ENCODE measurements at regions of chr7 and their contacts with region 1.

Region 1: DNA sequence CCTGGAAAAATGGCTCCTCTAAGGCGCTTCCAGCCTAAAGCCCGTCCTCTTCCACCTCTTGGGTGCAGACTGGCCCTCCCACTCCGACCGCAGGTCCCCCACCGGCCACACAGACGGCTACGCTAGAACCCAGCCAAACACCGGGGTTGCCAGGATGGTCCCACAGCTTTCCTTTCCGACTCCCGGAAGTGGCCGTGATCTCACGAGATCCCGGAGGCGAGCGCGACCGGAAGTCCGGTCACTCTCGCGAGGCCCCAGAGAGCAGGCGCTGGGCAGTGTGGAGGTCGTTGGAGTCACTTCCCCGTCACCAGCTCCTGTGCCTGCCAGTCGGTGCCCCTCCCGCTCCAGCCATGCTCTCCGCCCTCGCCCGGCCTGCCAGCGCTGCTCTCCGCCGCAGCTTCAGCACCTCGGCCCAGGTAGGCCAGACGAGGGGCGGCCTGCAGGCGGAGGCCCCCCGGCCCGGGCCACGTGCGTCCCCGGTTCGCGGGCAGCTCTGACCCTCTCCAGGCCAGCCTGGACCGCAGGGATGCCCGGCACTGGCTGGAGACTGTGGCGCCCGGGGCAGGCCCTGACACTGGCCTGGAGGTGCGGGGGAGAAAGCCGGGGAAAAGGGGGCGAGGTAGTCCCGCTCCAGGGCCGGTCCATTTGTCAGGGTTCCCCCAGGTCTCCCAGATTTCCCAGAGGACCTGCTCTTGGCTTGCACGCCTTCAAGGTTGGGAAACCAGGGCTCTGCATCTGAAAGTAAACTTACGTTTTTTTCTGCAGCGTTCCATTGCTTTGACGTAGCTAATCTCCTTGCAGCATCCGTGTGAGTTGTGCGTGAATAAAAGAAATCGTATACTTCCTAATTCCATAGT is at the starts of genes MDH2 and STYXL1:
- DNase-seq: peak; percentile 97
- H3K4me3 ChIP-seq: peak within 1 kb of the TSS; percentile 77 to 97 (median 84)
- H3K27ac ChIP-seq: peak within 1 kb of the TSS; percentile 89
- H3K4me1 ChIP-seq: peaks cover 9% of the 10 kb centered on the region
- H3K27me3 ChIP-seq: no peaks in the 10 kb centered on the region
- CTCF ChIP-seq: no peak
- total RNA-seq, gene MDH2: 44.0 to 188 TPM
- total RNA-seq, gene STYXL1: 43.0 to 44.3 TPM

Region 2: DNA sequence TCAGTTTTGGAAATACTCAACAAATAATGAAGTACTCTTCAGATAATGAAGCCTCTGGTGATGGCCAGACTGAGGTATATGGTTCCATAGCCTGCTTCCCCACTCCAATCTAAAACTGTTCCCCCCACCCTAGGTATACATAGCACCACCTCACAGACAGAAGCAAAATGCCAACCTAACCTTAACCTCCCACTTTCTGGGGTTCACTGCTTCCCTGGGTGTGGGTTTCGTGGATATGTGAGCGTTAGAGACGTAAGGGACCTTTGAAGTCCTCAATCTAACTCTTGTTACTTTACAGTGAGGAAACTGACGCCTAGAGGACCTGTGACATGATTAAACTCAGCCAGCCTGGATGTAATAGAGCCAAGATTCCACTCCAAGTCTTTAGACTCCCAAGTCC is 167.8 kb before region 1 on chr7:
- CTCF ChIA-PET with region 1: no interaction called
- dilution Hi-C with region 1: no loop called
- in situ Hi-C with region 1: no loop called
- intact Hi-C with region 1: no loop called
- DNase-seq: no peak
- H3K4me3 ChIP-seq: peak overlapping the region; percentile 75 to 100 (median 76)
- H3K27ac ChIP-seq: no peak overlapping the region
- H3K4me1 ChIP-seq: peaks cover 18% of the 10 kb centered on the region
- H3K27me3 ChIP-seq: no peaks in the 10 kb centered on the region
- CTCF ChIP-seq: no peak

Region 3: GRCh38 chr7:76086070-76086469 is 38.0 kb after region 1 on chr7:
- CTCF ChIA-PET with region 1: no interaction called
- dilution Hi-C with region 1: no loop called
- in situ Hi-C with region 1: no loop called
- intact Hi-C with region 1: loop called (anchors 2 kb)
- DNase-seq: peak; percentile 66
- H3K4me3 ChIP-seq: no peak overlapping the region
- H3K27ac ChIP-seq: peak overlapping the region; percentile 55
- H3K4me1 ChIP-seq: peaks cover 56% of the 10 kb centered on the region
- H3K27me3 ChIP-seq: no peaks in the 10 kb centered on the region
- CTCF ChIP-seq: no peak

Region 4: DNA sequence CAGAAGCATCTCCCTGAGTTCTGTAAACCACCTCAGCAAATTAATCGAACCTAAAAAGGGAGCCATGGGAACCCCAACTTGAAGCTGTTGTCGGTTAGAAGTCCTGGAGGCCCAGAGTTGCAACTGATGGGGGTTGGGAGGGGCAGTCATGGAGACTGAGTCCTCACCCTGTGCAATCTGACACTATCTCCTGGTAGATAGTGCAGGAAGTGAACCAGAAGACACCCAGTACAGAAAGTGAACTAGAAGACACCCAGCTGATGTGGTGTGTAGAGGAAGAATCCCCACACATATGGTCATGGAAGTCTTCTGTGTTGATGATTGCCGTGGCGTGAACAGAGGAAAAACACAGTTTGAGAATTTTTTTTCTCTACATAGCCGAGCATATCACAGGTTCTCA is 94.8 kb after region 1 on chr7:
- CTCF ChIA-PET with region 1: no interaction called
- dilution Hi-C with region 1: no loop called
- in situ Hi-C with region 1: no loop called
- intact Hi-C with region 1: no loop called
- DNase-seq: no peak
- H3K4me3 ChIP-seq: no peak overlapping the region
- H3K27ac ChIP-seq: no peak overlapping the region
- H3K4me1 ChIP-seq: no peaks in the 10 kb centered on the region
- H3K27me3 ChIP-seq: no peaks in the 10 kb centered on the region
- CTCF ChIP-seq: no peak

Region 5: GRCh38 chr7:76166404-76167255 is 118.6 kb after region 1 on chr7:
- CTCF ChIA-PET with region 1: no interaction called
- dilution Hi-C with region 1: no loop called
- in situ Hi-C with region 1: no loop called
- intact Hi-C with region 1: no loop called
- DNase-seq: peak; percentile 91
- H3K4me3 ChIP-seq: peak overlapping the region; percentile 51 to 61 (median 60)
- H3K27ac ChIP-seq: peak overlapping the region; percentile 87
- H3K4me1 ChIP-seq: peaks cover 19% of the 10 kb centered on the region
- H3K27me3 ChIP-seq: no peaks in the 10 kb centered on the region
- CTCF ChIP-seq: no peak